ENCODE measurements at regions of chr10 and their contacts with region 1.

Region 1: DNA sequence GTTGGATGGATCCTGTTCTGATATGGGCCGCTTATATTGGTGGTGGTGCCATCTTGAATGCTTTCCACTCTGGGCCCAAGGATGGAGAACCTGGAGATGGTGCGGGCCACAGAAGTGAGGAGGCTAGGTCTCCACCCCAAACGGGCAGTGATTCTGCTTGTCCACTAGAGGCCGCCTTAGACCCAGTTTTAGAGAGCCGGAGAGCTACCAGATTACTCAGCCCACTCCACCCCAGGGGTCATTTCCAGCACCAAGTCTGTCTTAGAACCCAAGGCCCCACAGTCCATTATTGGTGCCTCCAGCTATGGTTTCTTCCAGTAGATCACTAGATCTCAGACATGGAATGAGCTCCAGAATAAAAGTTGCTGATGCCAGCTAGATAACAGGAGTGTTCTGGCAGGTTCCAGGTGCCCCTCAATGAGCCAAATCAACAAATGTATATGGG is 11.8 kb upstream of the CAMK2G start:
- DNase-seq: peak; percentile 65
- H3K4me3 ChIP-seq: no peak overlapping the region
- H3K27ac ChIP-seq: peak overlapping the region; percentile 39
- H3K27me3 ChIP-seq: no peaks in the 10 kb centered on the region
- CTCF ChIP-seq: peak; percentile 87

Region 2: DNA sequence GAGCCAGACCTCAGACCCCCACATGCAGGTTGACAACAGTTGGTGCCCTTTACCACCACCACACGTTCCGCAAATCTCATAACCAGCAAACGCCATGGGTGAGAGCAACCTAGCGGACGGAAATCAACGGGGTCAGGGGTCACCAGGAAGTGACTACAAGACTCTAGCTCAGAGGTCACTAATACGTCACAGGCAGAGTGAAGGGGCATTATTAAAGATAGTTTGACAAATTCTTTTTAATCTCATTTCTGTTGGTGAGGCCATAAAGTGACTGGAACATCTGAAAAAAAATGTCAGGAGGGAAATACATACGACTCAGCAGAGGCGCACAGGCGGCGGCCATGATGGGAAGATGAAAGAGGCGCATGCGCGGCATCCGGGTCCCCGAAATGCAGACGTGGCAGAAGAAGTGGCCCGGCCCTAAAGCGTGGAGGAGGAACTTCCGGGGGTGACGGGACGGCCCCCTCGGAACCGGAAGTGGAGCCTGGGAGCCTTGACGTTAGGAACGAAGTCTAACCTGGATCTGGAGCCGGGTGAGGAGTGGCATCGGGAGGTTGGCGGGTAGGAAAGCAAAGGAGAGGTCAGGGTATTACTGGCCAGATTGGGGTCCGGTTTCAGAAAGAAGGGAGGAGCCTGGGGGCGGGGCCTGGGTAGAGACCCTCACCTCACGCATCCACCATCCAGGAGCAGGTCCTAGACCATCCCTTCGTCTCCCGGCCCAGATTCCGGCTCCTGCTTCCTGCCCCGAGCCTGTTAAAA is 142.0 kb before region 1 on chr10 and contains the start of gene SEC24C:
- CTCF ChIA-PET with region 1: no interaction called
- POLR2A ChIA-PET with region 1: no interaction called
- DNase-seq: peak; percentile 90
- H3K4me3 ChIP-seq: peak within 1 kb of the TSS; percentile 96
- H3K27ac ChIP-seq: peak within 1 kb of the TSS; percentile 96
- H3K27me3 ChIP-seq: no peaks in the 10 kb centered on the region
- CTCF ChIP-seq: no peak
- polyA plus RNA-seq, gene SEC24C: 86.9 and 97.4 TPM in 2 replicates

Region 3: GRCh38 chr10:73791871-73792400 is 94.2 kb before region 1 on chr10:
- CTCF ChIA-PET with region 1: no interaction called
- POLR2A ChIA-PET with region 1: no interaction called
- DNase-seq: no peak
- H3K4me3 ChIP-seq: no peak overlapping the region
- H3K27ac ChIP-seq: no peak overlapping the region
- H3K27me3 ChIP-seq: no peaks in the 10 kb centered on the region
- CTCF ChIP-seq: no peak

Region 4: DNA sequence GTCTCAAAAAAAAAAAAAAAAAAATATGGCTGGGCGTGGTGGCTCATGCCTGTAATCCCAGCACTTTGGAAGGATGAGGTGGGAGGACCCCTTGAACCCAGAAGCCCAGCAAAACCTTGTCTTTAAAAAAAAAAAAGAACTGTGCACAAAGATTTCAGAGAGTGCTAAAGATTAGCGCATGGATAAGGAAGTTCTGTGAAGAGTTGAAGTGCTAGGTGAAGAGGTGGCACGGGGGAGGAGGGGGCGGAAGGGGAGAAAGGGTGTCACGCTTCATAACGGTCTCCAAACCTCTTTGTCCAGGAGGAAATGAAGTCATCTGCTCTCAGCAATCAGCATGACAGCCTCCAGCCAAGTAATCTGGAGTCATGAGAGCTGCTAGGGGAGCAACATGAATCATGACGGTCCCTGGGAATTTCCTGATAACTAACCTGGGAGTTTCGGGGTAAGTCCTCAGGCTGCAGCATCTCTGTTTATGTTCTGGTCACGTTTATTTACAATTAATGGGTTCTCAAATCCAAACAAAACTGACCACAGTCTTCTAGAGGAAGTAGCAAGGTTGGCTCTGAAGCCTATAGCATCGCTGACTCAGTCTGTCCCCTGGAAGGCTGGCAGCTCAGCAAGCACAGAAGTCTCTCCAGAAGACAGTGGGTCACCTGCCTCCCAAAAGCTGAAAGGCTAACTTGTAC is 22.9 kb after region 1 on chr10:
- CTCF ChIA-PET with region 1: interaction called, 10 read pairs
- POLR2A ChIA-PET with region 1: interaction called, 81 read pairs
- DNase-seq: peak; percentile 99
- H3K4me3 ChIP-seq: peak overlapping the region; percentile 35; the same call in 1 of the 2 replicates
- H3K27ac ChIP-seq: peak overlapping the region; percentile 100
- H3K27me3 ChIP-seq: no peaks in the 10 kb centered on the region
- CTCF ChIP-seq: no peak

Region 5: DNA sequence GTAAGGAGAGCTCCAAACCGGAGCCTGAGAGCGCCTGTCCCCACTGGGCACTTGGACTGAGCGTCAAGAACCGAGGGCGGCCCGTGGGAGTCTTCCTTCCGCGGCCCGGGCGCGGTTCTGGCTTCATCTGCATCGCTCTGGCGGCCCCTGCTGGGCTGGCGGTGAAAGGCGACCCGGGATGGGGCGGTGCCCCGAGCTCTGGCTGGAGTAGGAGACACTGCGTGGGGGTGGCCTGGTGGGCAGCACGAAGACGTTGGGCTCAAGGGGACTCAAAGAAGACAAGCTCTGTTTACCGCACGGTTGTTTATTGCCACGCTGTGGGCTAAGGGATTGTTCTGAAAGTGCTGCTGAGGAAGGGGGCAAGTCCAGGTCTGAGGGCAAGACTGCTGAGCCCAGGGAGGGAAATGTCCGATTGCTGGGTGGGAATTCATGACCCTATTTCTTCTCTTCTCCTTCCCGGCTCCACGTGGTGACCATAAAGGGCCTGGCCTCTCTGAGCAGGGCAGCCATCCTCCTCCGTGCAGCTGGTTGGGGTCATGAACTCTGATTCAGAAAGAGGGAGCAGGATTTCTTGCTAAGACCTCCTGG is 54.6 kb after region 1 on chr10:
- CTCF ChIA-PET with region 1: interaction called, 204 read pairs
- POLR2A ChIA-PET with region 1: interaction called, 11 read pairs
- DNase-seq: no peak
- H3K4me3 ChIP-seq: no peak overlapping the region
- H3K27ac ChIP-seq: peak overlapping the region; percentile 31
- H3K27me3 ChIP-seq: no peaks in the 10 kb centered on the region
- CTCF ChIP-seq: peak; percentile 94

Region 6: DNA sequence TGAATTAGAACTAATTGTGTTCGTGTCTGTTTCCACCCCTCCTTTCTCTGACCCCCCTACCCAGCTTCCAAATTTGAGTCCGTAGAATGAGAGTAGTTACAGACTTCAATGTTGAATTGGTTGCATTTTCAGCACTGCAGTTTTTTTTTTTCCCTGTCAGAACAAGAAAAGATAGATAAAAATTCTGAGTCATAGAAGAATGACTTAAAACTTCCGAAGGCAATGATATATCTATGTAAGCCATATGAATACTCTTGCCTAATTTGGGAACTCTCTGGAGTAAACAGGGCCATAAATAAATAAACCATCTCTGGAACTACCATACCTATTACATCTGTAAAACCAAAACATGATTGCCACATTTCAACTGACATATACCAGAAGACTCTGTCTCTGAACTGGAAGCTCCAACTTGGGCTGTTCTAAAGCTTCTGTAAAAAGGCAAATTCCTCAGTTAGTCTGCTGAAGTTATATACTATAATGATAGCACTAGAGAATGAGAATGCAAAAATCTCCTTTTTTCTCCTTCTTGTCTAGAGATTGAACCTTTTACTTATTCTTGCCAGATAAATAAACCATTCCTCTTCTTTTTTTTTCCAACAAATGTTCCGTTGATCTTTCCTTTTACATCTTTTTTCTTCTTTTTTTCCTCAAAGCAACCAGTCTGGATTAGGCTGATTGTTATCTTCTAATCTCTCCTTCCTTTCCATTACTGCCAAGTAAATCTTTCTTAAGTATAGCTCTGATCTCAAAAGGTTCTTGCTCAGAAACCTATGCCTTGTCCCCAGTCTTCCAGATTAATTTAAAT is 135.3 kb after region 1 on chr10:
- CTCF ChIA-PET with region 1: interaction called, 11 read pairs
- POLR2A ChIA-PET with region 1: interaction called, 20 read pairs
- DNase-seq: peak; percentile 74
- H3K4me3 ChIP-seq: peak overlapping the region; percentile 23; the same call in 1 of the 2 replicates
- H3K27ac ChIP-seq: peak overlapping the region; percentile 81
- H3K27me3 ChIP-seq: no peaks in the 10 kb centered on the region
- CTCF ChIP-seq: no peak

Region 7: GRCh38 chr10:74103560-74104248 is 217.6 kb after region 1 on chr10:
- CTCF ChIA-PET with region 1: interaction called, 20 read pairs
- POLR2A ChIA-PET with region 1: no interaction called
- DNase-seq: no peak
- H3K4me3 ChIP-seq: no peak overlapping the region
- H3K27ac ChIP-seq: no peak overlapping the region
- H3K27me3 ChIP-seq: no peaks in the 10 kb centered on the region
- CTCF ChIP-seq: peak; percentile 50